ENCODE measurements at regions of chr1 and their contacts with region 1.

Region 1: GRCh38 chr1:227318003-227318852 is at the start of gene CDC42BPA:
- DNase-seq: peak; percentile 80 to 82 (median 80)
- ATAC-seq: peak; percentile 64 to 79 (median 72)
- H3K4me3 ChIP-seq: peak within 1 kb of the TSS; percentile 68 to 78 (median 69)
- H3K27ac ChIP-seq: peak within 1 kb of the TSS; percentile 90 to 91 (median 91)
- H3K4me1 ChIP-seq: peaks cover 0 to 26% (median 3%) of the 10 kb centered on the region in 4 donors
- H3K27me3 ChIP-seq: no peaks in the 10 kb centered on the region
- CTCF ChIP-seq: no peak
- POLR2A ChIP-seq: peak; percentile 42
- total RNA-seq, gene CDC42BPA: 11.4 to 35.0 (median 22.2) TPM

Region 2: DNA sequence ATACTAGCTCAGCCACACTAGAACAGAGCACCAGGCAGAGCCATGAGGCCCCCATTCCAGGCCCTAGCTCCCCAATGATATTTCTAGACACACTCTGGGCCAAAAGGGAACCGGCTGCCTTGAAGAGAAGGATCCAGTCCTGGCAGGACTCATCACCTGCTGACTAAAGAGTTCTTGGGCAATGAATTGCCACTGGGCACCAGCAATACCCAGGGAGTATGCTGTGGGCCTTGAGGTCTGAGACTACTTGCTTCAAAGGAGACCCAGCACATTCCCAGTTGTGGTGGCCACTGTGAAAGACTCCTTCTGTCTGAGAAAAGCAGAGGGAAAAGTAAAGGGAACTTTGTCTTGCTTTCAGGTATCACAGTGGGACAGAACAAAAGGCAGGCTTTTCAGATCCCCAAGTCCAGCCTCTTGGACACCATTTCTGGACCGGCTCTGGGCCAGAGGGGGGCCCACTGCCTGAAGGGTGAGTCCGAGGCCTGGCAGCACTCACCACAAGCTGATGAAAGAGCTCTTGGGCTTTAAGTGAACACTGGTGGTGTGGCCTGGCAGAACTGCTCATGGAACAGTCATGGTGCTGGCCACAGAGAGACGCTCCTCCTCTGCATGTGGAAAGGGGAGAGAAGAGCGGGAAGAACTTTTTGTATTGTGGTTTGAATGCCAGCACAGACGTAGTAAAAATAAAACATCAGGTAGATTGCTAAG is 72.5 kb before region 1 on chr1:
- intact Hi-C with region 1: loop called in 1 of 2 experiments (anchors 10 kb)
- DNase-seq: no peak
- ATAC-seq: peak in 1 of 4 donors; percentile 3
- H3K4me3 ChIP-seq: no peak overlapping the region
- H3K27ac ChIP-seq: peak overlapping the region in 1 of 3 donors; percentile 5
- H3K4me1 ChIP-seq: peaks cover 0 to 20% (median 10%) of the 10 kb centered on the region in 4 donors
- H3K27me3 ChIP-seq: no peaks in the 10 kb centered on the region
- CTCF ChIP-seq: no peak
- POLR2A ChIP-seq: no peak

Region 3: GRCh38 chr1:227459326-227459841 is 141.2 kb after region 1 on chr1:
- intact Hi-C with region 1: no loop called
- DNase-seq: no peak
- ATAC-seq: no peak
- H3K4me3 ChIP-seq: no peak overlapping the region
- H3K27ac ChIP-seq: no peak overlapping the region
- H3K4me1 ChIP-seq: no peaks in the 10 kb centered on the region
- H3K27me3 ChIP-seq: no peaks in the 10 kb centered on the region
- CTCF ChIP-seq: no peak
- POLR2A ChIP-seq: no peak